ENCODE measurements at regions of chr1 and their contacts with region 1.

Region 1: GRCh38 chr1:85307987-85308832 is 31.8 kb upstream of the BCL10 start:
- DNase-seq: peak; percentile 79 to 87
- H3K4me3 ChIP-seq: no peak overlapping the region
- H3K4me3 Mint-ChIP-seq: peak overlapping the region; percentile 57
- H3K27ac Mint-ChIP-seq: no peak overlapping the region
- H3K4me1 ChIP-seq: peaks cover 16% of the 10 kb centered on the region
- H3K4me1 Mint-ChIP-seq: no peaks in the 10 kb centered on the region
- H3K27me3 ChIP-seq: no peaks in the 10 kb centered on the region
- H3K27me3 Mint-ChIP-seq: no peaks in the 10 kb centered on the region
- CTCF ChIP-seq: peak; percentile 81 to 89

Region 2: GRCh38 chr1:85344256-85344694 is 36.1 kb after region 1 on chr1:
- CTCF ChIA-PET with region 1: interaction called, 3 read pairs
- POLR2A ChIA-PET with region 1: no interaction called
- intact Hi-C with region 1: loop called (anchors 1 kb)
- DNase-seq: peak; percentile 50 to 53
- H3K4me3 ChIP-seq: no peak overlapping the region
- H3K4me3 Mint-ChIP-seq: no peak overlapping the region
- H3K27ac Mint-ChIP-seq: peak overlapping the region; percentile 32
- H3K4me1 ChIP-seq: peaks cover 16% of the 10 kb centered on the region; the same call in 1 of the 2 replicates
- H3K4me1 Mint-ChIP-seq: peaks cover 21% of the 10 kb centered on the region
- H3K27me3 ChIP-seq: no peaks in the 10 kb centered on the region
- H3K27me3 Mint-ChIP-seq: no peaks in the 10 kb centered on the region
- CTCF ChIP-seq: peak in 1 of 2 experiments; percentile 78

Region 3: DNA sequence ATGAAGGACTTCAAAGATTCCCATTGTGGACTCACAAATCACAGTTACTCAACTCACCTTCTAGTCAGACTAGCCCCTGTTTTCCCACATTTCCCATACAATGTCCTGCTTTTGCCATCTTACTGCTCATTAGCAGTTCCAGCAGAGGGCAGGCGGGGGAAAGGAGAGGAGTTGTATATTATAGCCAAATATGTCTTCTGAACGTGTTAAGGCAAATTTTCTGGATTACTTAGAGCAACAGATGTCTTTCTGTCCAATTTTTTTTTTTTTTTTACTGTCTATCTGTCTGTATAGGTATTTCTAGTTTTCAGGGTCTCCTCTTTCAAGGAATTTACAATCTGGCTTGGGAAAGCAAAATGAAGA is 186.7 kb after region 1 on chr1:
- CTCF ChIA-PET with region 1: no interaction called
- POLR2A ChIA-PET with region 1: no interaction called
- intact Hi-C with region 1: loop called (anchors 2 kb)
- DNase-seq: peak in 1 of 2 experiments; percentile 42
- H3K4me3 ChIP-seq: no peak overlapping the region
- H3K4me3 Mint-ChIP-seq: no peak overlapping the region
- H3K27ac Mint-ChIP-seq: no peak overlapping the region
- H3K4me1 ChIP-seq: no peaks in the 10 kb centered on the region; the same call in 1 of the 2 replicates
- H3K4me1 Mint-ChIP-seq: peaks cover 15% of the 10 kb centered on the region
- H3K27me3 ChIP-seq: no peaks in the 10 kb centered on the region
- H3K27me3 Mint-ChIP-seq: no peaks in the 10 kb centered on the region
- CTCF ChIP-seq: peak in 1 of 2 experiments; percentile 53

Region 4: GRCh38 chr1:85580872-85581801 is 272.9 kb after region 1 on chr1:
- CTCF ChIA-PET with region 1: interaction called, 11 read pairs
- POLR2A ChIA-PET with region 1: interaction called, 3 read pairs
- intact Hi-C with region 1: loop called (anchors 1 kb)
- DNase-seq: peak; percentile 69 to 81
- H3K4me3 ChIP-seq: peak overlapping the region; percentile 65
- H3K4me3 Mint-ChIP-seq: peak overlapping the region; percentile 83
- H3K27ac Mint-ChIP-seq: peak overlapping the region; percentile 92
- H3K4me1 ChIP-seq: peaks cover 45% of the 10 kb centered on the region
- H3K4me1 Mint-ChIP-seq: peaks cover 28% of the 10 kb centered on the region
- H3K27me3 ChIP-seq: no peaks in the 10 kb centered on the region
- H3K27me3 Mint-ChIP-seq: no peaks in the 10 kb centered on the region
- CTCF ChIP-seq: peak; percentile 46 to 72

Region 5: GRCh38 chr1:85692730-85693314 is 384.6 kb after region 1 on chr1:
- CTCF ChIA-PET with region 1: interaction called, 7 read pairs
- POLR2A ChIA-PET with region 1: no interaction called
- intact Hi-C with region 1: loop called (anchors 1 kb)
- DNase-seq: no peak
- H3K4me3 ChIP-seq: no peak overlapping the region
- H3K4me3 Mint-ChIP-seq: no peak overlapping the region
- H3K27ac Mint-ChIP-seq: no peak overlapping the region
- H3K4me1 ChIP-seq: no peaks in the 10 kb centered on the region
- H3K4me1 Mint-ChIP-seq: no peaks in the 10 kb centered on the region
- H3K27me3 ChIP-seq: no peaks in the 10 kb centered on the region
- H3K27me3 Mint-ChIP-seq: no peaks in the 10 kb centered on the region
- CTCF ChIP-seq: peak in 1 of 2 experiments; percentile 7

Region 6: DNA sequence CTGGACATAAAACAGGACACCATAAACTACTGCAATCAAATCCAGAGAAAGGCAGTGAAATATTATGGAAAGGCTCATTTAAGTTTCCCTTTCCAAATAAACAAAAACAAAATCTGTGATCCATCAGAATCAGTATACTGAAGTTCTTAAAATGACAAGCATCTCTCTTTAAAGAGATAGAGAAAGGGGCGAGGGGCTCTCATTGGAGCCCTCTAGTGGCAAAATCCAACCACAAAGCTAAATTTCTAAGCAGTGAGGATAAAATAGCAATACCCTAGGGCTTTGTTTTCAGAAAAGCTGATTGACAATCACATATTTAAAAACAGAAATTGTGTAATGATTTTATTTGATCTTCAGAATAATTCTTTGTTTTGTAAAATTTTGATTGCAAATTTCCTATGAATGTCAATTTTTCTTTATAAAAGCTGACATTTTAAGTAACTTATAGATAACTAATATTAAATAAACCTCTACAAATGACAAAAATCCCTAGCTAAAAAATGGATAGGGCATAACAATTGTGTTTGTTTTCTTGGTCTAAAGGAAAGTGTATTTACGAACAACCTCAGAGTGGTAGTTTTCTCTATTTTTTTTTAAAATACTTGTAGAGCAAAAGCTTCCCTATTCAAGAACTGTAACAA is 710.2 kb after region 1 on chr1:
- CTCF ChIA-PET with region 1: interaction called, 3 read pairs
- POLR2A ChIA-PET with region 1: no interaction called
- intact Hi-C with region 1: loop called (anchors 1 kb)
- DNase-seq: peak in 1 of 2 experiments; percentile 8
- H3K4me3 ChIP-seq: no peak overlapping the region
- H3K4me3 Mint-ChIP-seq: no peak overlapping the region
- H3K27ac Mint-ChIP-seq: no peak overlapping the region
- H3K4me1 ChIP-seq: no peaks in the 10 kb centered on the region
- H3K4me1 Mint-ChIP-seq: no peaks in the 10 kb centered on the region
- H3K27me3 ChIP-seq: no peaks in the 10 kb centered on the region
- H3K27me3 Mint-ChIP-seq: no peaks in the 10 kb centered on the region
- CTCF ChIP-seq: peak; percentile 41 to 57

Measured in Caco-2 (cell line).